CD4-positive, alpha-beta memory T cell (primary cell): ENCODE measurements at regions of chr15 and their contacts with region 1.

Region 1: DNA sequence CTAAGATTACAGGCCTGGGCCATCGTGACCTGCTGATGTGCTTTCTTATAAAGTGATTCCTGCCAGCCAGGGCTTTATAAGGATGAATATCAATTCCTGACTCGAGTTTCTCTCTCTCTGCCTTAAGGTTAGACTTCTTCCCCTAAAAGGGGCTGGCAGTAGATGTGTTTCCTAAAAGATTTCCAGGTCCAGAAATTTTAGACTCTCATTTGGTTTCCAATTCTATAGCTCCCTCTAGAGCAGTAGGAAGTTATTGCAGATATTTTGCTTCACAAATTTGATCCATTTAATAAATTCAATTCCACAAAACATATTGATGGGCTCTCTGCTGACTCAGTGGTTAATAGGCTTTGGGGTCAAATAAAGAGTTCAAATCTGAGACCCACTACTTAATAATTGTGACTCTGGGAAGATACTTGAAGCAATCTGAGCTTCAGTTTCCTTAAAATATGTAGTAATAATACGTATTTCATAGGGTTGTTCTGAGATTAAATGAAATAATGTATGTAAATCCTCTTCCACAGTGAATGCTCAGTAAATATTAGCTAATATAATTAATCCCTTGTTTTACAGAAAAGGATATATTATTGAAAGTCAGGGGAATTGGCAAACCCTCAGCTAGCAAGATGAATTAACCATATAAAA is 2.1 kb downstream of the TRIM69 start:
- DNase-seq: peak in 4 of 5 donors; percentile 59 to 65 (median 64)
- H3K4me3 ChIP-seq: no peak overlapping the region
- H3K4me3 Mint-ChIP-seq: peak overlapping the region in 5 of 8 donors; percentile 32 to 68 (median 43)
- H3K27ac ChIP-seq: peak overlapping the region; percentile 19
- H3K27ac Mint-ChIP-seq: peak overlapping the region; percentile 77 to 93 (median 87)
- H3K4me1 ChIP-seq: peaks cover 54% of the 10 kb centered on the region
- H3K4me1 Mint-ChIP-seq: peaks cover 35 to 55% (median 48%) of the 10 kb centered on the region in 4 donors
- H3K27me3 ChIP-seq: no peaks in the 10 kb centered on the region
- H3K27me3 Mint-ChIP-seq: no peaks in the 10 kb centered on the region

Region 2: DNA sequence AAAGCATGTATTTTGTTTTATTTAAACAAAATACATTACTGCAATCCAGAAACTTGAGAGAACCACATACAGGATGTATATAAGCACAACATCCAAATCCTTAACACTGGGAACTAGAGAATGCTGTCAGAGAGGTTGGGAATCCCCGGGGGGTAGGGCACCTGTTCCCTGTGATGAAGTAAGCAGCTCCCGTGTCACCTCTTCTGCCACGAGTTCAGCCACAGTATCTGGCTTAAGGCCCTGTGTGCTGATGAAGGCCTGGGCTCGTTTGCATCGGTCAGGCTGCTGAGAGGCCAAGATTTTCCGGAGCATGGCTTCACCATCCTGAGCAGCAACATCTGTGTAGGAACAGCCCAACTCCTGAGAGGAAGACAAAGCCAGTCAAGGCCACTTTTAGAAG is 165.1 kb before region 1 on chr15:
- CTCF ChIA-PET with region 1: interaction called, 61 read pairs
- POLR2A ChIA-PET with region 1: interaction called, 17 read pairs
- intact Hi-C with region 1: no loop called
- DNase-seq: no peak
- H3K4me3 ChIP-seq: no peak overlapping the region
- H3K4me3 Mint-ChIP-seq: no peak overlapping the region
- H3K27ac ChIP-seq: no peak overlapping the region
- H3K27ac Mint-ChIP-seq: no peak overlapping the region
- H3K4me1 ChIP-seq: peaks cover 3% of the 10 kb centered on the region
- H3K4me1 Mint-ChIP-seq: peaks cover 5 to 17% (median 10%) of the 10 kb centered on the region in 4 donors
- H3K27me3 ChIP-seq: no peaks in the 10 kb centered on the region
- H3K27me3 Mint-ChIP-seq: no peaks in the 10 kb centered on the region

Region 3: DNA sequence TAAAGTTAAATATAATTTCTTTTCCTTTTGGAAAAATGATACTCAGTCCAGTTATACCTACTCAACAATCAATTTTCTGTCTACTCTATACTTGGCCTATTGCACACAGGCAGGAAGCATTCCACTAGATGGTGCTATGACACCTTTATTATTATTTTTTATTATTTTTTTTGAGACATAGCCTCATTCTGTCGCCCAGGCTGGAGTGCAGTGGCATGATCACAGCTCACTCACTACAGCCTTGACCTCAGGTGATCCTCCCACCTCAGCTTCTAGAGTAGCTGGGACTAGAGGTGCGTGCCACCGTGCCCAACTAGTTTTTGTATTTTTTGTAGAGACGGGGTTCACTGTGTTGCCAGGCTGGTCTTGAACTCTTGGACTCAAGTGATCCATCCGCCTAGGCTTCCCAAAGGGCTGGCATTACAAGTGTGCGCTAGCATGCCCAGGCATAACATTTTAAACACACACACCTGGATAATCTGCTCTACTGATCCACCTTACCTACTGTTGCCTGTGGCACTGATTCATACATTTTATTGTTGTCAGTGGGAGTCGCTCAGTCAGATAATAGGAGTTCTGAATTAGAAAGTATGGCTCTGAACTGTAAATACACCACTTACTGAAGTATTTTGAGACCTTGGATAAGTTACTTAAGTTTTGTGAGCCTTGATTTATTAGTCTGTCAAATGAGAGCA is 145.3 kb before region 1 on chr15:
- CTCF ChIA-PET with region 1: interaction called, 107 read pairs
- POLR2A ChIA-PET with region 1: interaction called, 12 read pairs
- intact Hi-C with region 1: loop called (anchors 1 kb)
- DNase-seq: peak in 4 of 5 donors; percentile 58 to 61 (median 60)
- H3K4me3 ChIP-seq: no peak overlapping the region
- H3K4me3 Mint-ChIP-seq: no peak overlapping the region
- H3K27ac ChIP-seq: no peak overlapping the region
- H3K27ac Mint-ChIP-seq: peak overlapping the region in 5 of 7 donors; percentile 62 to 83 (median 78)
- H3K4me1 ChIP-seq: peaks cover 19% of the 10 kb centered on the region
- H3K4me1 Mint-ChIP-seq: peaks cover 8 to 31% (median 17%) of the 10 kb centered on the region in 4 donors
- H3K27me3 ChIP-seq: no peaks in the 10 kb centered on the region
- H3K27me3 Mint-ChIP-seq: no peaks in the 10 kb centered on the region

Region 4: GRCh38 chr15:44606740-44607139 is 131.7 kb before region 1 on chr15:
- CTCF ChIA-PET with region 1: interaction called, 10 read pairs
- POLR2A ChIA-PET with region 1: no interaction called
- intact Hi-C with region 1: no loop called
- DNase-seq: no peak
- H3K4me3 ChIP-seq: no peak overlapping the region
- H3K4me3 Mint-ChIP-seq: no peak overlapping the region
- H3K27ac ChIP-seq: no peak overlapping the region
- H3K27ac Mint-ChIP-seq: peak overlapping the region in 2 of 7 donors; percentile 10
- H3K4me1 ChIP-seq: no peaks in the 10 kb centered on the region
- H3K4me1 Mint-ChIP-seq: no peaks in the 10 kb centered on the region
- H3K27me3 ChIP-seq: no peaks in the 10 kb centered on the region
- H3K27me3 Mint-ChIP-seq: no peaks in the 10 kb centered on the region

Region 5: DNA sequence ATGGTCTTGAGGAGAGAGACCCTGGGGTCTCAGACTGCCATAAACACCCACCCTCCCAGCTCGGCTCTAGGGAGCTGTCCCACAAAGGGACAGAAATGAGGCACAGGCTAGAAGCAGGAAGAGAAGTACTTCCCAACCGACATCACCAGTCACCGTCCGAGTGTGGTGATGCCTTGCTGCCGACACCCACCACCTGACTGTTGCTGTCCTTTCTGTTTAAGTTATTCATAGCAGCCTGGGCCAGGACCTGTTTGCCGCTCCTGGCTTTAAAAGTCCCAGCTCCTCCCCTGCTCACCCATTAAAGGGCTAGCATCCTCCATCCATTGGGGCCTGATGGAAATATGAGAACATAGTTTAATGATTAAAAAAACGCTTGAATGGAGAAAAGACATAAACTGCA is 61.8 kb before region 1 on chr15:
- CTCF ChIA-PET with region 1: interaction called, 35 read pairs
- POLR2A ChIA-PET with region 1: interaction called, 5,737 read pairs
- intact Hi-C with region 1: no loop called
- DNase-seq: peak in 1 of 5 donors; percentile 22
- H3K4me3 ChIP-seq: peak overlapping the region; percentile 10 to 23
- H3K4me3 Mint-ChIP-seq: peak overlapping the region; percentile 45 to 88 (median 82)
- H3K27ac ChIP-seq: peak overlapping the region; percentile 39
- H3K27ac Mint-ChIP-seq: peak overlapping the region; percentile 87 to 97 (median 95)
- H3K4me1 ChIP-seq: peaks cover 100% of the 10 kb centered on the region
- H3K4me1 Mint-ChIP-seq: peaks cover 67 to 95% (median 86%) of the 10 kb centered on the region in 4 donors
- H3K27me3 ChIP-seq: no peaks in the 10 kb centered on the region
- H3K27me3 Mint-ChIP-seq: no peaks in the 10 kb centered on the region